Breast epithelium (tissue), 4 donors: ENCODE measurements at regions of chr4 and their contacts with region 1.

Region 1: GRCh38 chr4:182404376-182404775 is 161.2 kb downstream of the TENM3 start:
- DNase-seq: no peak
- H3K4me3 ChIP-seq: no peak overlapping the region
- H3K27ac ChIP-seq: no peak overlapping the region
- H3K4me1 ChIP-seq: no peaks in the 10 kb centered on the region
- H3K27me3 ChIP-seq: no peaks in the 10 kb centered on the region
- CTCF ChIP-seq: no peak
- POLR2A ChIP-seq: no peak

Region 2: DNA sequence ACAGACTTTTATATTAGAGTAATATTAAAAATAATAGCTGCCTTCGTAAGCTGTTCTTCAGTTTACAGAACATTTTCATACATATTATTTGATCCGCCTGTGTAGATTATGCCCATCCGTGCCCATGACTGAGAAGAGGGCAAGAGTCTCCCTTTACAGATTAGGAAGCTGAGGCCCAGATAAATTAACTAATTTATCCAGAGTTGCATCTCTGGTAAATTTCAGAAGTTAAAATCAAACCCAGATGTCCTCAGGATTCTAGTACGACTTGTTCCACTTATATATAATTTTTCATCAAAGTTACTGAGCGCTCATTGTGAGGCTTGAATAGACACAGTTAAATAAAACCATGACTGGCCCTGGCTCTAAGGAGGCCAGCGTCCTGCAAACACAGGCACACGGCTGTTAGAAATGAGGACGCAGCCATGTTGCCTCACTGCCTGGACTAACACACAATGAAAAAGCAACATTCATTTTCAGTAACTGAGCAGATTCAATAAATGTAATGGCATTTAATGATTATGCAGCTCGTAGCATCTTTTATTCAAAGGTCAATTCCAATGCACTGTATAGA is 13.2 kb before region 1 on chr4:
- intact Hi-C with region 1: no loop called
- DNase-seq: no peak
- H3K4me3 ChIP-seq: no peak overlapping the region
- H3K27ac ChIP-seq: no peak overlapping the region
- H3K4me1 ChIP-seq: no peaks in the 10 kb centered on the region
- H3K27me3 ChIP-seq: no peaks in the 10 kb centered on the region
- CTCF ChIP-seq: no peak
- POLR2A ChIP-seq: no peak

Region 3: GRCh38 chr4:182555997-182556418 is 151.6 kb after region 1 on chr4:
- intact Hi-C with region 1: loop called (anchors 5 kb)
- DNase-seq: no peak
- H3K4me3 ChIP-seq: no peak overlapping the region
- H3K27ac ChIP-seq: no peak overlapping the region
- H3K4me1 ChIP-seq: no peaks in the 10 kb centered on the region
- H3K27me3 ChIP-seq: no peaks in the 10 kb centered on the region
- CTCF ChIP-seq: no peak
- POLR2A ChIP-seq: no peak